Mammary epithelial cell (primary cell): ENCODE measurements at regions of chr15 and their contacts with region 1.

Region 1: GRCh38 chr15:31488426-31489204 is 162.0 kb downstream of the KLF13 start:
- DNase-seq: peak; percentile 78
- H3K4me3 ChIP-seq: no peak overlapping the region
- H3K27ac ChIP-seq: no peak overlapping the region
- H3K4me1 ChIP-seq: peaks cover 22% of the 10 kb centered on the region
- H3K27me3 ChIP-seq: no peaks in the 10 kb centered on the region
- CTCF ChIP-seq: peak; percentile 86 to 92

Region 2: DNA sequence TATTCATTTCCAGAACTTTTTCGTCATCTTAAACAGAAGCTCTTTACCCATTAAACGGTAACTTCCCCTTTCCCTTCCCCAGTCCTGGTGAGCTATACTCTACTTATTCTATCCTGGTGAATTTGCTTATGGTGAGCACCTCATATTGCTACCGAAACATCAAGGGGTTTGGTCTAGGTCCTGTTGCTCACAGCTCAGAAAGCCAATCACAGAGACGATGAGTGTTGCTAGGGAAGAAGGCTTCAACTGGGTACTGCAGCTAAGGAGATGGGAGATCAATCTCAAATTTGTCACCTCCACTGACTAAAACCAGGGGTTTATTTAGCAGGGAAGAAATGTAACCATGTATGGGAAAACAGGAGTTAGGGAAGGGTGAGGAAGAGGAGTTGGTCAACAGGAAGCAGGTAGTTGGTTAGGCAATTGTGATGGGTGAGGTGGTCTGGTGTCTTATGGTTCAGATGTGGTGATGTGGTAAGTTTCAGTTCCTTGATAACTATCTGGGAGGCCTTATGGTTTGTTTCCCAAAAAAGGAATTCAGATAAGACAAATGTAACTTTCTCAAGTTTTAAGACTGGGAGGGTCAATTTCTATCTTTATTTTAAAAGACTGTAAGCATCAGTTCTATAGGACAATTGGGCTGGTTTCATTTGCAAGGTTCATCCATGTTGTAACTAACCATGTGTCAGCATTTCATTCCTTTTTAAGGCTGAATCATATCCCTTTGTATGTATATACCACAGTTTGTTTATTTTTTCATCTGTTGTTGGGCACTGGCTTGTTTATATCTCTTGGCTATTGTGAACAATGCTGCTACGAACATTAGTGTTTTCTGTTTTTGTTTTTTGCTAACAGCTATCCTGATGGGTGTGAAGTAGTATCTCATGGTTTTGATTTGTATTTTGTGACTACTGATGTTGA is 838.3 kb before region 1 on chr15:
- CTCF ChIA-PET with region 1: no interaction called
- dilution Hi-C with region 1: no loop called
- in situ Hi-C with region 1: loop called in 1 of 2 experiments (anchors 25 kb)
- intact Hi-C with region 1: no loop called
- DNase-seq: no peak
- H3K4me3 ChIP-seq: no peak overlapping the region
- H3K27ac ChIP-seq: no peak overlapping the region
- H3K4me1 ChIP-seq: no peaks in the 10 kb centered on the region
- H3K27me3 ChIP-seq: no peaks in the 10 kb centered on the region
- CTCF ChIP-seq: no peak

Region 3: GRCh38 chr15:31128919-31129768 is 359.5 kb before region 1 on chr15:
- CTCF ChIA-PET with region 1: interaction called, 4 read pairs
- dilution Hi-C with region 1: loop called (anchors 25 kb)
- in situ Hi-C with region 1: no loop called
- intact Hi-C with region 1: loop called (anchors 1 kb)
- DNase-seq: peak; percentile 29
- H3K4me3 ChIP-seq: no peak overlapping the region
- H3K27ac ChIP-seq: no peak overlapping the region
- H3K4me1 ChIP-seq: no peaks in the 10 kb centered on the region
- H3K27me3 ChIP-seq: no peaks in the 10 kb centered on the region
- CTCF ChIP-seq: peak; percentile 91 to 96

Region 4: GRCh38 chr15:31215490-31216214 is 273.0 kb before region 1 on chr15:
- CTCF ChIA-PET with region 1: interaction called, 10 read pairs
- dilution Hi-C with region 1: no loop called
- in situ Hi-C with region 1: loop called in 1 of 2 experiments (anchors 5 kb)
- intact Hi-C with region 1: no loop called
- DNase-seq: peak; percentile 49
- H3K4me3 ChIP-seq: peak overlapping the region; percentile 9 to 43 (median 34)
- H3K27ac ChIP-seq: peak overlapping the region; percentile 8
- H3K4me1 ChIP-seq: peaks cover 25% of the 10 kb centered on the region
- H3K27me3 ChIP-seq: no peaks in the 10 kb centered on the region
- CTCF ChIP-seq: peak; percentile 34 to 75

Region 5: DNA sequence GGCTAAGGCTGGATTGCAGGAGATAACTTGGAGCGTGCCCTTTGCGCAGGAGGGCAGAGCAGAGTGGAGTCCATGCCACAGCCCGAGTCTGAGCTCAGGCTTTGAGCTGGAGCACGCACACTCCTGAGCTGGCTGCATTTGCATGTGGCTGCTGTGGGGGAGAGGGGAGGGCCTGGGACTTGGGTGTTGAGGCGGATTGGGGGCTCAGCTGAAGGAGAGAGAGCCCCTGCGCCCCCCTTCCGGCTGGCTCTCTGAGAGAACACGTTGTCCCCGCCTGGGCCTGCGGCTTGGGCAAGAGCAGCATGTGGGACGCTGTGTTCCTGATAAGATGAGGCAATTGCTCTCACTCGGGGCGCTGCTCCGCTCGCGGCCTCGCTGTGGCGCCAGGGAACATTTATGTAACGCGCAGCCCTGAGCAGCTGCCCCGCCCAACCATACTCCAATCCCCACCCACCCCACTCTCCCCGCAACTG is 122.9 kb before region 1 on chr15:
- CTCF ChIA-PET with region 1: interaction called, 4 read pairs
- dilution Hi-C with region 1: no loop called
- in situ Hi-C with region 1: loop called in 1 of 2 experiments (anchors 10 kb)
- intact Hi-C with region 1: loop called (anchors 1 kb)
- DNase-seq: peak; percentile 70
- H3K4me3 ChIP-seq: no peak overlapping the region
- H3K27ac ChIP-seq: no peak overlapping the region
- H3K4me1 ChIP-seq: peaks cover 57% of the 10 kb centered on the region
- H3K27me3 ChIP-seq: no peaks in the 10 kb centered on the region
- CTCF ChIP-seq: peak; percentile 22 to 53

Region 6: GRCh38 chr15:31442203-31443111 is 46.2 kb before region 1 on chr15:
- CTCF ChIA-PET with region 1: interaction called, 13 read pairs
- dilution Hi-C with region 1: no loop called
- in situ Hi-C with region 1: loop called in 1 of 2 experiments (anchors 5 kb)
- intact Hi-C with region 1: loop called (anchors 1 kb)
- DNase-seq: peak; percentile 82
- H3K4me3 ChIP-seq: no peak overlapping the region
- H3K27ac ChIP-seq: peak overlapping the region; percentile 56
- H3K4me1 ChIP-seq: peaks cover 29% of the 10 kb centered on the region
- H3K27me3 ChIP-seq: no peaks in the 10 kb centered on the region
- CTCF ChIP-seq: peak in 1 of 2 donors; percentile 33

Region 7: DNA sequence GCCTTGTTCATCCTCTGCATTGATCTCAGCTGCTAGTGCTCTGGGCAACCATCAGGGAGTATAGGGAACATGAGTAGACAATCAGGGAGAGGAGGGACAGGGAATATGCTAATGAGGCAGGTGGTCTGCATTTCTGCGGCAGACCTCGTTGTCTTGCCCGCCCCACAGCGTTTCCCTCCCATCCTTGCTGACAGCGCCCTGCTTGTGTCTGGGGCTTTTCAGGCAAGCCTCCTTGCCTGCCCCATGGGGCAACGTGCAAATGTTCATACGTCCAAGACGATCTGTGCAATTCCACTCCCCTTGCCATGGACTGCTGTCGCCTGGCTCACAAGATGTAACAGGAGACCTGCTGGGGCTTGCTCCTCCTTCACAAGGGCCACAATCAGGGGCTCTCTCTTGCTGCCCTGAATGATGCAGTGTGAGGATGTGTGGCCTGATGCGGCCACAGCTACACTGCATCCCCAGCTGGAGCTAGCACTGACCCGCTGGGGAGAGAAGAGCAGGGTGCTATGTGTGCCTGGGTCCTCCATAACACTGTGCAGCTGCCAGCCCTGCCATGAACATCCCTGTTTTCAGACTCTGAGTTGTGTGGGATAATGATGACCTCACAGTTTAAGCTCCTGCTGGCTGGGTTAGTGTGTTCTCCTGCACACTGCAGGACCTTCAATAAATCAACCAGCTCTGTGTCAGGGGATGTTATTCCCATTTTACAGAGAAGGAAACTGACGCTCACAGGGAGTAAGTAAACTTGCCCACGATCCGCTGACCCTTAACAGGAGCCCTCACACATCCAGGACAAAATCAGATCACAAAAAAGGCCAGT is 49.4 kb after region 1 on chr15:
- CTCF ChIA-PET with region 1: no interaction called
- dilution Hi-C with region 1: no loop called
- in situ Hi-C with region 1: no loop called
- intact Hi-C with region 1: no loop called
- DNase-seq: no peak
- H3K4me3 ChIP-seq: no peak overlapping the region
- H3K27ac ChIP-seq: no peak overlapping the region
- H3K4me1 ChIP-seq: no peaks in the 10 kb centered on the region
- H3K27me3 ChIP-seq: no peaks in the 10 kb centered on the region
- CTCF ChIP-seq: no peak

Region 8: GRCh38 chr15:31605371-31605931 is 116.8 kb after region 1 on chr15:
- CTCF ChIA-PET with region 1: no interaction called
- dilution Hi-C with region 1: no loop called
- in situ Hi-C with region 1: no loop called
- intact Hi-C with region 1: no loop called
- DNase-seq: no peak
- H3K4me3 ChIP-seq: no peak overlapping the region
- H3K27ac ChIP-seq: no peak overlapping the region
- H3K4me1 ChIP-seq: no peaks in the 10 kb centered on the region
- H3K27me3 ChIP-seq: no peaks in the 10 kb centered on the region
- CTCF ChIP-seq: no peak